Left cardiac atrium (tissue), 4 donors: ENCODE measurements at regions of chr4 and their contacts with region 1.

Region 1: DNA sequence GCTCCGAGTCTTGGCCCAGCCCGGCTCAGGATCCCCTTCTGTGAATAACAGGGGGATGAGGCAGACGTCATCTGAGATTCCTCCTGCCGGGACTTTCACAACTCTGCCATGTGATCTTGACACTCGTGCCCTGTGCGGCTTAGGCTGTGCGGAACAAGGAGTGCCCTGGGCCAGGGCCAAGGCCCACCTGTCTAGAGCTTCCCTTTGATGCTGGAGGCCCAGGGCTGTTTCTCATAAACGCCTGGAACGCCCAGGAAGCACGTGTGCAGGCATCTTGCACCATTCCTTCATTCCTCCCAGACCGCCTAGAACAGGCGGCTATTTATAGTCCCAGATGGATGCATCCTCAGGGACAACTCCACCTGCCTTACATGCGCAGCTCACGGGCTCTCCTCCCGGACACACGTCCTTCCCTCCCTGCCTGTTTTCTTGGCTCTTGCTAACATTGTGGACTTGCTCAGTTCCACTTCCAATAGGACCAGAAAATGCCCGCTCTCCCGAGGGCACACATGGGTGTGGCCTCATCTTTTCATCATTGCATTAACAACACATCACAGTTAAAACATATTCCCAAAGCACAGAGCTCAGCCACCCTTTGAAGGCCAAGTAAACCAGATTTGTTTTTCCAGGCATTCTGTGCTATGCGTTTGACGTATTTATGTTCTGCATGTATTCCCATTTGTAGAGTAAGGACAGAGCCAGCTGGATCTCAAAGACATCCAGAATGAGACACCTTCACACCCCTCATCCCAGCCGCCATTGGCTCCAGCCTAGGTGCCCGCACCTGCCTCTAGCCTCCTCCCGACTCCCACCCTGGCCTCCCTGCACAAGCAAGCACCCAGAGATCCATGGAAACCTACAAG is 57.2 kb downstream of the ABLIM2 start:
- DNase-seq: peak; percentile 73
- ATAC-seq: peak; percentile 47 to 84

Region 2: DNA sequence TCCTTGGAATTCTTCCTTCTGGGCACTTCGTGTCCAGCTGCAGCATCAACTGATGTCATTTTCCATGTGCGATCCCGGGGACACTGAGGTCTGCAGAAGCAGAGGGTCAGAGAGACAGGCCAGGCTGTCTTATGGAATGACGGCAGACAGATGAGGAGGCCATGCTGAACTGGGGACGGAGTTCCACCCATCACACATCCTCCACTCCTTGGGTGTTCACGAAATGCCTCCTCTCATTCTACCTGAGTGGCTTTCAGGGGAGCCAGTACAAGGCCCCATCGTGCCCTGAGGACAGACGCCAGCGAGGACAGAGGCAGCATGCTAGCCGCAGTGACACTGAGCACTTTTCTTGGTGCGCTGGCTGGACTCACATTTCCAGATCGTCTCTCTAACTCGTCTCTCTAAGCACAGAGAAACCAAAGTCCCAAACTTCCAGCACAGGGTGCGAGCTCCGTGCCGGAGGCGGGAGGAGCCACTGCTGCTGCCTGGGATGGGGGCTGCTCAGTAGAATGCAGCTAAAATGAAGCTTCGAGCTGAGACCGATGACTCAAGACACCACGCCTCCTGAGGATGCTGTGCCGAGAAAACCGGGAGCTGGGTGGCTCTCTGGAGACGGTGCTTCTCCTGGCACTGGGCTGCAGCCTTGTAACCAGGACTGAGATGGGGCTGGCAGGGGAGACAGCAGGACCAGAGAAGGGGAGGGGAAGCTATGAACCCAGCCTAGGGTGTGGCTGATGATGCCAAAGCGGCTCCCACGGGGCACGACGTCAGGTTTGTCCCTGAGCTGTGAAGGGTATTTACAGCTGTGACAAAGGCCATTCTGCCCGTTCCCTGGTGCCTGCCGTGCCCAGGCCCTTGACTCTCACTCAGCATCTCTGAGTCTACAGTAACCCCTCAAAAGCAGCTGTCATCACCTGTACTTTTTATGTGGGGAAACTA is 49.0 kb after region 1 on chr4:
- intact Hi-C with region 1: loop called in 1 of 2 experiments (anchors 5 kb)
- DNase-seq: no peak
- ATAC-seq: no peak